ENCODE measurements at regions of chr5 and their contacts with region 1.

Region 1: DNA sequence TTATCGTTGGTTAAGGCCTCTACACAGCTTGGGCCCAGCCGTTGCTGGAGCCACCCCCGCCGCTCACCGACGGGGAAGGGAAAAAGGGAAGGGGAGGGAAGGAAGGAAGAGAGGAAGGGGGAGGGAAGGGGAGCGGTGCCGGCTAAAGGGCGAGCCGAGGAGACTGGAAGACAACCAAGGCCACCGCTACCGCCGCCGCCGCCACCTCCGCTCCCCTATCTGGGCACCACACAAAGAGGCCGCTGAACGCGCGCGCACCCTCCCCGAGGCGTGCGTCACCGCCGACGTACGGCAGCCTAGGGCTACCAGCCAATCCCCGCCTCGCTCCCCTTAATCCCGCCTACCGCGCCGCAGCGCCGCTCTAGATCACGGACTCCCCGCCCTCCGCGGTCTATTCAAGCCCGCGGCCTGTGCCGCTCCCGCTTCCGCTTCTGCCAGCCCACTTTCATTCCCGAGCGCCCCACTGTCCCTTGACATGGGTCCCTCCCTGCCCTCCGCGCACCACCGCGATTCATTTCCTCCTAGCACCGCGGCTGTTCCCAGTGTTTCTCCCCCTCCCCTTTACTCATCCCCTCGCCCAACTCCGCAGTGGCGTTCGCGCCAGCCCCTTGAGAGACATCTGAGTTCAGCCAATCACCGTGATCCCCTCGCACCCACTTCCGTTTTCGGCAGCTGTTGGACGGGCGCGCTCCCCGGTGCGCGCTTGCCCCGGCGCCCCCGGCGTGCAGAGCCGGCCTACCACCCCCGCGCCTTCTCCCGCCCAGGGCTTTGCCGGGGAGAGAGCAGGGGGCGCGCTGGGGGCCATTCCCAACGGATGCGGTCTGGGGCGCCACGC is at the start of gene HNRNPA0:
- DNase-seq: peak; percentile 94 to 99 (median 98)
- ATAC-seq: peak; percentile 90
- H3K4me3 ChIP-seq: peak within 1 kb of the TSS; percentile 98
- H3K4me3 Mint-ChIP-seq: peak within 1 kb of the TSS; percentile 85 to 100 (median 98)
- H3K27ac ChIP-seq: peak within 1 kb of the TSS; percentile 98
- H3K27ac Mint-ChIP-seq: peak within 1 kb of the TSS; percentile 99 to 100 (median 100)
- H3K4me1 ChIP-seq: peaks cover 17 to 20% of the 10 kb centered on the region in 2 donors
- H3K4me1 Mint-ChIP-seq: peaks cover 21 to 43% (median 31%) of the 10 kb centered on the region in 7 donors
- H3K27me3 ChIP-seq: no peaks in the 10 kb centered on the region
- H3K27me3 Mint-ChIP-seq: peaks cover 0 to 2% (median 0%) of the 10 kb centered on the region in 5 donors
- total RNA-seq, gene HNRNPA0: 30.0 to 40.2 (median 30.7) TPM

Region 2: GRCh38 chr5:137344723-137345322 is 409.5 kb before region 1 on chr5:
- CTCF ChIA-PET with region 1: no interaction called
- POLR2A ChIA-PET with region 1: no interaction called
- intact Hi-C with region 1: no loop called
- DNase-seq: no peak
- ATAC-seq: no peak
- H3K4me3 ChIP-seq: no peak overlapping the region
- H3K4me3 Mint-ChIP-seq: no peak overlapping the region
- H3K27ac ChIP-seq: no peak overlapping the region
- H3K27ac Mint-ChIP-seq: no peak overlapping the region
- H3K4me1 ChIP-seq: no peaks in the 10 kb centered on the region
- H3K4me1 Mint-ChIP-seq: no peaks in the 10 kb centered on the region
- H3K27me3 ChIP-seq: no peaks in the 10 kb centered on the region
- H3K27me3 Mint-ChIP-seq: peaks cover 0 to 10% (median 8%) of the 10 kb centered on the region in 5 donors

Region 3: DNA sequence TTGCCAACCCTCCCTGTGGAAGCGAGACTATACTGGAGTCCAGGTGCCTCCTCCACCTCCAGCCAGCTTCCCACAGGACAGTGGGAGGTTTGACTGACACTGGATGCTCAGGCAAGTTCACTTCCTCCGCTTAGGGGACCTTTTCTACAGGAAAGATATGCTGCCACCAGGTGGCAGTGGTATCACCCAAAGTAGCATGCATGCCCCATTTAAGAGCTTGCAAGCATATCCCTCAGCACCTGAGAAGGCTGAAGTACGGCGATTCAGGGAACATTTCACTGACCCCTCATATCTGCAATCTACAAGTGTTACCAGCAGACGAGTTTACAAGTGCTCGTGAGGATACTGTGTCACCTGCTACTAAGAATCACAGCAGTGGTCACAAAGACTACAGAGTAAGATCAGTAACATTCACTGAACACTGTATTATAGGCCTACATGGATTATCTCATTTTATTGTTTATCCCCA is 94.0 kb before region 1 on chr5:
- CTCF ChIA-PET with region 1: interaction called, 328 read pairs
- POLR2A ChIA-PET with region 1: interaction called, 19 read pairs
- intact Hi-C with region 1: no loop called
- DNase-seq: peak; percentile 32 to 78 (median 70)
- ATAC-seq: peak; percentile 91
- H3K4me3 ChIP-seq: no peak overlapping the region
- H3K4me3 Mint-ChIP-seq: no peak overlapping the region
- H3K27ac ChIP-seq: no peak overlapping the region
- H3K27ac Mint-ChIP-seq: peak overlapping the region in 4 of 9 donors; percentile 27 to 45 (median 36)
- H3K4me1 ChIP-seq: peaks cover 0 to 4% of the 10 kb centered on the region in 2 donors
- H3K4me1 Mint-ChIP-seq: peaks cover 0 to 17% (median 14%) of the 10 kb centered on the region in 7 donors
- H3K27me3 ChIP-seq: no peaks in the 10 kb centered on the region
- H3K27me3 Mint-ChIP-seq: no peaks in the 10 kb centered on the region

Region 4: DNA sequence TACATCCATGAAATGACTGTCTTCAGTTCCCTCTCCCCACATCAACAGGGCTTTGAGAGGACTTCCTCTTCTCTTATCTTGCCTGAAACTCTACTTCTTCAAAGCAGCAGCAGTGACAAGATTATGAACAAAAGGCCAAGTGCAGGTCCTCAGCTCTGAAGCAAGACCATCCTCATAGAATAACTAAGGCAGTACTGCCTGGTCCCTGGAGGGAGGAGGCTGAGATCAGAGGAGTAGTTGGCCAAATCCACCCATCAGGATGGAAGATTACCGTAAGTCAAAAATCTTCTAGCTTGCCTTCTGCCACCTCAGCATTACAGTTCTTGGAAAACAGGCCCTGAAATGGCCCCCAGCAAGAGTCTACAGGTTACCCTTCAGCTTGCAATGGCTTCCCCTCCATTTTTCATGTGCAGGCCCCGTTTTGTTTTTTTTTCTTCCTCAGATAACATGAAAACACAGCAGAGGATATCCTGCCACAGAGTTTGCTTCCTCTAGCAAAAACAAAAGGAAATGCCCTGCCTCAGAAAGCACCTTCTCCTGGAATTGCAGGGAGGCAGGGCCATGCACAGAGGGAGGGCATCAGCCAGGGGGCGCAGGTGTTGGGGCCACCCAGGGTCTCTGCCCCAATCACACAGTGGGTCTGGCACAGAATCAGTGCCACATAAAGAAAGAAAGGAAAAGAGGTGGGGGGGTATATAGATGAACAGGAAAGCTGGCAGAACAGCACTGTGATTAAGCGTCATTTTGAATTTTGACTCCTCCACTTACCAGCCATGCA is 58.5 kb before region 1 on chr5:
- CTCF ChIA-PET with region 1: interaction called, 3 read pairs
- POLR2A ChIA-PET with region 1: interaction called, 54 read pairs
- intact Hi-C with region 1: loop called in 1 of 2 experiments (anchors 5 kb)
- DNase-seq: peak in 8 of 9 donors; percentile 7 to 77 (median 68)
- ATAC-seq: peak; percentile 82
- H3K4me3 ChIP-seq: peak overlapping the region; percentile 38
- H3K4me3 Mint-ChIP-seq: peak overlapping the region; percentile 62 to 85 (median 78)
- H3K27ac ChIP-seq: peak overlapping the region; percentile 58
- H3K27ac Mint-ChIP-seq: peak overlapping the region; percentile 90 to 98 (median 96)
- H3K4me1 ChIP-seq: peaks cover 22 to 47% of the 10 kb centered on the region in 2 donors
- H3K4me1 Mint-ChIP-seq: peaks cover 31 to 78% (median 76%) of the 10 kb centered on the region in 7 donors
- H3K27me3 ChIP-seq: no peaks in the 10 kb centered on the region
- H3K27me3 Mint-ChIP-seq: no peaks in the 10 kb centered on the region

Region 5: GRCh38 chr5:137743031-137743640 is 11.2 kb before region 1 on chr5:
- CTCF ChIA-PET with region 1: interaction called, 28 read pairs
- POLR2A ChIA-PET with region 1: interaction called, 121 read pairs
- intact Hi-C with region 1: loop called (anchors 1 kb)
- DNase-seq: peak in 8 of 9 donors; percentile 34 to 77 (median 72)
- ATAC-seq: peak; percentile 93
- H3K4me3 ChIP-seq: no peak overlapping the region
- H3K4me3 Mint-ChIP-seq: peak overlapping the region in 1 of 10 donors; percentile 54
- H3K27ac ChIP-seq: no peak overlapping the region
- H3K27ac Mint-ChIP-seq: peak overlapping the region in 2 of 9 donors; percentile 64 to 70
- H3K4me1 ChIP-seq: peaks cover 1 to 12% of the 10 kb centered on the region in 2 donors
- H3K4me1 Mint-ChIP-seq: peaks cover 5 to 32% (median 12%) of the 10 kb centered on the region in 7 donors
- H3K27me3 ChIP-seq: no peaks in the 10 kb centered on the region
- H3K27me3 Mint-ChIP-seq: peaks cover 0 to 3% (median 0%) of the 10 kb centered on the region in 5 donors

Region 6: GRCh38 chr5:138065102-138065501 is 310.8 kb after region 1 on chr5:
- CTCF ChIA-PET with region 1: no interaction called
- POLR2A ChIA-PET with region 1: no interaction called
- intact Hi-C with region 1: no loop called
- DNase-seq: no peak
- ATAC-seq: no peak
- H3K4me3 ChIP-seq: no peak overlapping the region
- H3K4me3 Mint-ChIP-seq: no peak overlapping the region
- H3K27ac ChIP-seq: no peak overlapping the region
- H3K27ac Mint-ChIP-seq: peak overlapping the region in 2 of 9 donors; percentile 5 to 22
- H3K4me1 ChIP-seq: no peaks in the 10 kb centered on the region
- H3K4me1 Mint-ChIP-seq: peaks cover 0 to 5% (median 4%) of the 10 kb centered on the region in 7 donors
- H3K27me3 ChIP-seq: no peaks in the 10 kb centered on the region
- H3K27me3 Mint-ChIP-seq: no peaks in the 10 kb centered on the region

Region 7: GRCh38 chr5:138213161-138214029 is 459.1 kb after region 1 on chr5 and contains the start of gene CDC23:
- CTCF ChIA-PET with region 1: no interaction called
- POLR2A ChIA-PET with region 1: no interaction called
- intact Hi-C with region 1: loop called (anchors 2 to 10 kb)
- DNase-seq: peak; percentile 65 to 95 (median 92)
- ATAC-seq: peak; percentile 98
- H3K4me3 ChIP-seq: peak within 1 kb of the TSS; percentile 97
- H3K4me3 Mint-ChIP-seq: peak within 1 kb of the TSS; percentile 92 to 99 (median 98)
- H3K27ac ChIP-seq: peak within 1 kb of the TSS; percentile 91
- H3K27ac Mint-ChIP-seq: peak within 1 kb of the TSS; percentile 95 to 98 (median 96)
- H3K4me1 ChIP-seq: peaks cover 0 to 8% of the 10 kb centered on the region in 2 donors
- H3K4me1 Mint-ChIP-seq: peaks cover 14 to 32% (median 27%) of the 10 kb centered on the region in 7 donors
- H3K27me3 ChIP-seq: no peaks in the 10 kb centered on the region
- H3K27me3 Mint-ChIP-seq: no peaks in the 10 kb centered on the region
- total RNA-seq, gene CDC23: 13.0 to 39.6 (median 25.5) TPM

Region 8: GRCh38 chr5:138337685-138338410 is 583.5 kb after region 1 on chr5 and contains the start of gene FAM53C:
- CTCF ChIA-PET with region 1: no interaction called
- POLR2A ChIA-PET with region 1: no interaction called
- intact Hi-C with region 1: loop called in 1 of 2 experiments (anchors 2 kb)
- DNase-seq: peak; percentile 87 to 98 (median 93)
- ATAC-seq: peak; percentile 91
- H3K4me3 ChIP-seq: peak within 1 kb of the TSS; percentile 86
- H3K4me3 Mint-ChIP-seq: peak within 1 kb of the TSS; percentile 77 to 98 (median 94)
- H3K27ac ChIP-seq: peak within 1 kb of the TSS; percentile 95
- H3K27ac Mint-ChIP-seq: peak within 1 kb of the TSS; percentile 96 to 100 (median 99)
- H3K4me1 ChIP-seq: peaks cover 17 to 25% of the 10 kb centered on the region in 2 donors
- H3K4me1 Mint-ChIP-seq: peaks cover 16 to 42% (median 39%) of the 10 kb centered on the region in 7 donors
- H3K27me3 ChIP-seq: no peaks in the 10 kb centered on the region
- H3K27me3 Mint-ChIP-seq: no peaks in the 10 kb centered on the region
- total RNA-seq, gene FAM53C: 25.0 to 71.8 (median 27.7) TPM

Region 9: GRCh38 chr5:138654281-138654867 is 900.0 kb after region 1 on chr5:
- CTCF ChIA-PET with region 1: no interaction called
- POLR2A ChIA-PET with region 1: no interaction called
- intact Hi-C with region 1: loop called in 1 of 2 experiments (anchors 10 kb)
- DNase-seq: peak in 8 of 9 donors; percentile 63 to 84 (median 80)
- ATAC-seq: peak; percentile 88
- H3K4me3 ChIP-seq: no peak overlapping the region
- H3K4me3 Mint-ChIP-seq: peak overlapping the region; percentile 4 to 72 (median 36)
- H3K27ac ChIP-seq: no peak overlapping the region
- H3K27ac Mint-ChIP-seq: peak overlapping the region in 8 of 9 donors; percentile 44 to 93 (median 80)
- H3K4me1 ChIP-seq: peaks cover 15 to 26% of the 10 kb centered on the region in 2 donors
- H3K4me1 Mint-ChIP-seq: peaks cover 17 to 34% (median 27%) of the 10 kb centered on the region in 7 donors
- H3K27me3 ChIP-seq: peaks cover 0 to 36% of the 10 kb centered on the region in 2 donors
- H3K27me3 Mint-ChIP-seq: peaks cover 80 to 92% (median 86%) of the 10 kb centered on the region in 5 donors